ENCODE measurements at regions of chr12 and their contacts with region 1.

Region 1: GRCh38 chr12:66169221-66170170 is at the start of gene TMBIM4:
- DNase-seq: peak; percentile 82
- H3K4me3 Mint-ChIP-seq: peak within 1 kb of the TSS; percentile 95
- H3K27ac Mint-ChIP-seq: peak within 1 kb of the TSS; percentile 99
- H3K4me1 Mint-ChIP-seq: peaks cover 31% of the 10 kb centered on the region
- H3K27me3 Mint-ChIP-seq: no peaks in the 10 kb centered on the region
- total RNA-seq, gene TMBIM4: 58.6 and 61.9 TPM in 2 replicates

Region 2: DNA sequence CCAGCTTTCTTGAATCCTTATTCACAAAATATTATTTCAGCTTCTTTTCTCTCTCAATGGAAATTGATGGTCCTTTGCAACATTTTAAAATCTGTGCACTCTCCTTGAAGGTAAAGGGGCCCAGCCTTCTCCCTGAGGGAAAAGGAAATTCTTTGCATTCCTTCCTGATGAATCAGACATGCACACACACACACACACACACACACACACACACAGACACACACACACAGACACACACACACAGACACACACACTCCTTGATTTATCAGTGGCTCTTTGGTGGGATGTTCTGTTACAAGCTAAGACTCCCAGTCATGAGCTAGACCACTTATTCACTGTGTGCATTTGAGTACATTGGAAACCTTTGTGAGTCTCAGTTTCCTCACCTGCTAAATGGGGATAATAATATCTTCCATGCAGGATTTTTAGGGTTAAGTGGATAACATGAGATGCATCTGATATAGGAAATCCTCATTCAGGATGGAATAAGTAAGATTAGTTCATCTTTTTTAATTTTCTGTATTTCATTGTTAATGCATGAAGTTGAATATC is 390.3 kb before region 1 on chr12:
- intact Hi-C with region 1: no loop called
- DNase-seq: no peak
- H3K4me3 Mint-ChIP-seq: no peak overlapping the region
- H3K27ac Mint-ChIP-seq: no peak overlapping the region
- H3K4me1 Mint-ChIP-seq: no peaks in the 10 kb centered on the region
- H3K27me3 Mint-ChIP-seq: peaks cover 13% of the 10 kb centered on the region

Region 3: DNA sequence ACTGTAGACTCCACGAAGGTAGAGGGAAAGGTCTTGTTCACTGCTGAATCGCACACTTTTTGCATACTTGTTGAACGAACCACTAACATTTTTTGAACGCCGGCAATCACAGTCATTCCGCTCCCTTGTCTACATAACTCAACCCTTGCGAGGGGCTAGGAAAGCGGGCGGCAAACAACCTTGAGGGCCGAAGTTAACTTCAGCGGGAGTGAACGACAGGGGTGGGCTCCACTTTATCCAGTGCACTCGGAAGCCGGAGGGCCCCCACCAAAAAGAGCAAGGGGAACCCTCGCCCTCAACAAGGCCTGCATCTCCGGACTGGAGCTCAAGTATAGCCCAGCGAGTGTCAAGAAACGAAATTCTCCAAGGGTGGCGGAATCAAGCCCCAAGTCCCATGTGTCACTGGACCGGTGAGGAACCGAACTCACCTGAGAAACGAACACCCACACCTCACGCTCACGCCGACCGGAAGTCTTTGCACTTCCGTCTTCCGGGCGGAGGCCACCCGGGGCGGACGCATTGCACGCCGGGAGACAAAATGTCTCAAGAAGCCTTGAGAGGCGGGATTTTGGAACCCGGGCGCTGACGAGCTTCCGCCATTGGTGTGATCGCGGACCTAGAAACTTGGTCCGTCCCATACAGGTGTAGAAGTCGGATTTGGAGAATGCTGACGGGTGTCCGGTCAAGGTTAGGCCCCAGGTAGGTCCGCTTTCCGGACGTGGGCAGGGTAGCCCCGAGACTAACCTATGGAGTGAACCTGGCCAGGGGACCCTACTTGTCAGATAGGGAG is 39.0 kb before region 1 on chr12 and contains the start of gene LLPH:
- intact Hi-C with region 1: loop called (anchors 2 kb)
- DNase-seq: peak; percentile 86
- H3K4me3 Mint-ChIP-seq: peak within 1 kb of the TSS; percentile 98
- H3K27ac Mint-ChIP-seq: peak within 1 kb of the TSS; percentile 93
- H3K4me1 Mint-ChIP-seq: peaks cover 57% of the 10 kb centered on the region
- H3K27me3 Mint-ChIP-seq: no peaks in the 10 kb centered on the region
- total RNA-seq, gene LLPH: 31.3 and 33.6 TPM in 2 replicates

Region 4: GRCh38 chr12:66188584-66189485 is 19.3 kb after region 1 on chr12 and contains the start of gene IRAK3:
- intact Hi-C with region 1: loop called (anchors 1 kb)
- DNase-seq: peak; percentile 37
- H3K4me3 Mint-ChIP-seq: peak within 1 kb of the TSS; percentile 78
- H3K27ac Mint-ChIP-seq: peak within 1 kb of the TSS; percentile 84
- H3K4me1 Mint-ChIP-seq: peaks cover 31% of the 10 kb centered on the region
- H3K27me3 Mint-ChIP-seq: peaks cover 7% of the 10 kb centered on the region
- total RNA-seq, gene IRAK3: 3.2 TPM in 2 replicates

Region 5: DNA sequence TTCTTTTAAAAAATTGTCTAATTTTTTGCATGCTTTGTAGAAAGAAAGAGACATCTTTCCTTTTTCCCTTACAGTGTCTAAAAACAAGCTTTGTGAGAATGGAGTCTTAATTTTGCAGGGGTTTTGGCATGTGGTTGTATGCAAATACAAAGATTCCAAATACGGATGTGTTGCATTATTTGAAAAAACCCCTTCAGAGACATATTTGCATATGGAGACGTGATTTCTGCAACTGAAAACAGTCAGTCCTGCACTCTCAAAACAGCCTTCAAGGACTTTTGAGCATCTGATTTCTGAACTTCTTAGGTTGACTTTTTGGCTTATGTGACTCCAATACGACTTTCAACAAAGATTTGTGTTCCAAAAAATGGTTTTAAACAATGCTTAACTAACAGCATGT is 27.3 kb after region 1 on chr12:
- intact Hi-C with region 1: loop called (anchors 1 kb)
- DNase-seq: no peak
- H3K4me3 Mint-ChIP-seq: peak overlapping the region; percentile 75
- H3K27ac Mint-ChIP-seq: peak overlapping the region; percentile 72
- H3K4me1 Mint-ChIP-seq: peaks cover 27% of the 10 kb centered on the region
- H3K27me3 Mint-ChIP-seq: peaks cover 2% of the 10 kb centered on the region

Region 6: GRCh38 chr12:66203820-66204219 is 34.3 kb after region 1 on chr12:
- intact Hi-C with region 1: loop called (anchors 1 kb)
- DNase-seq: no peak
- H3K4me3 Mint-ChIP-seq: no peak overlapping the region
- H3K27ac Mint-ChIP-seq: peak overlapping the region; percentile 81
- H3K4me1 Mint-ChIP-seq: peaks cover 21% of the 10 kb centered on the region
- H3K27me3 Mint-ChIP-seq: peaks cover 7% of the 10 kb centered on the region

Region 7: DNA sequence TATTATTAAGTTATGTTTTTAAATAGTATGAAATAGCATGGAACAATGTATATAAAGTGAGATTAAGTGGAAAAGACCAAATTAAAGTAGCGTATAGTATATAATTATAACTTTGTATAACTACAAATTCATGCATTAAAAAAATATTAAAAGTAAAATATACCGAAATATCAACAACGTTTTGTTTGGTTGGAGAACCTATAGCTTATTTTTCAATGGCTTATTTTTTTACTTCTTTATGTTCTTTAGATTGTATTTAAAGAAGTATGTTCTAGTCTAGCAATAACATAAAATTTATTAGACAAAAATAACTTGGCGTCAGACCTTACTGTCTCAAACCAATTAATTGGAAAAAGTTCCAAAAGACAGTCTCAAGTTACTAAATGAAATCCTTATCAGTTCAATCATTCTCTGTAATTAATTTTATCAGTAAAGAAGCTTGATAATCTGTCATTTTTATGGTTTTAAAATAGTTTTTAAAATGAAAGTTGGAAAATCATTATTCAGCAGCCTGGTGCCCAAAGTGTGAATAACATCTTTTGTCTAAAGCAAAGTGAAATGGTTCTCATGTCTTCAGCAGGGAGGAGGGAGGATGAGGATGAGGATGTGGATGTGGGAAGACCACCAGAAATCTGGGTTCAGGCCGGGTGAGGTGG is 66.3 kb after region 1 on chr12:
- intact Hi-C with region 1: loop called (anchors 1 kb)
- DNase-seq: no peak
- H3K4me3 Mint-ChIP-seq: peak overlapping the region; percentile 59
- H3K27ac Mint-ChIP-seq: no peak overlapping the region
- H3K4me1 Mint-ChIP-seq: peaks cover 11% of the 10 kb centered on the region
- H3K27me3 Mint-ChIP-seq: peaks cover 17% of the 10 kb centered on the region

Region 8: GRCh38 chr12:66288121-66288520 is 118.6 kb after region 1 on chr12:
- intact Hi-C with region 1: loop called (anchors 1 kb)
- DNase-seq: peak; percentile 65
- H3K4me3 Mint-ChIP-seq: peak overlapping the region; percentile 11
- H3K27ac Mint-ChIP-seq: peak overlapping the region; percentile 72
- H3K4me1 Mint-ChIP-seq: peaks cover 66% of the 10 kb centered on the region
- H3K27me3 Mint-ChIP-seq: no peaks in the 10 kb centered on the region